Cardiac septum (tissue), 1 donor: ENCODE measurements at regions of chr5 and their contacts with region 1.

Region 1: DNA sequence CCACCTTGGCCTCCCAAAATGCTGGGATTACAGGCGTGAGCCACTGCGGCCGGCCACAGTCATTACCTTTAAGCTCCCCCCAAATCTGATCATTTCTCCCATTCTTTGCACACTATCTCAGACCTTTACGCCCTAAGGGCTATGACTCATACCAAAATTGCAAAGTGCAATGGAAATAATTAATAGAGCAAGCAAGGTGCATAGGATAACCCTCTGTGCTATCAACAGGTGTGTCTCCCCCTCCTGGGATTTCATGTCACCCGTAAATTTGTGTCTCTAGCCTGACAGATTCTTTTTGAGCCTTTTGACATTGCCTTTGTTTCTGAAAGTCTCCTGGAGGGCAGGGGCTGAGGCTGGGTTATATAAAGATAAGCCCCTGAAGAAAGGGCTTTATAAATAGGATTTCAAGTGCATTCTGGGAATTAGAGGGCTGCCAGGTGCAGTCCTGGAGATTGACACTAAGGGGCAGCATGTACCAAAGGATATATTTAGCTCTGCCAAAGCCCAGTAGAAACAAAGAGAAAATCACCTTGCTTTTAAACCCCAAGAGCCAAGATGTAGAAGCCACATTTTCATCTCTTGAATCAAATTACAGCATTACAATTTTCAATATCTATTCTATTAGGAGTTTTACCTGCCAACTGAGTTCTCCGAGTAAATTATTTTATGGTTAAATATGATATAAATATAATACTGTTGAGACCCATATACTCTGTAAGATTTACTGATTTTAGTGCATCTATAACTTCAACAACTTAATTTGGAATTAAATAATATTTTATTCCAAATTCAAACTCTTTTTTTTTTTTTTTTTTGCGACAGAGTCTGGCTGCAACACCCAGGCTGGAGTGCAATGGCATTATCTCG is 18.2 kb downstream of the S100Z start:
- DNase-seq: no peak

Region 2: DNA sequence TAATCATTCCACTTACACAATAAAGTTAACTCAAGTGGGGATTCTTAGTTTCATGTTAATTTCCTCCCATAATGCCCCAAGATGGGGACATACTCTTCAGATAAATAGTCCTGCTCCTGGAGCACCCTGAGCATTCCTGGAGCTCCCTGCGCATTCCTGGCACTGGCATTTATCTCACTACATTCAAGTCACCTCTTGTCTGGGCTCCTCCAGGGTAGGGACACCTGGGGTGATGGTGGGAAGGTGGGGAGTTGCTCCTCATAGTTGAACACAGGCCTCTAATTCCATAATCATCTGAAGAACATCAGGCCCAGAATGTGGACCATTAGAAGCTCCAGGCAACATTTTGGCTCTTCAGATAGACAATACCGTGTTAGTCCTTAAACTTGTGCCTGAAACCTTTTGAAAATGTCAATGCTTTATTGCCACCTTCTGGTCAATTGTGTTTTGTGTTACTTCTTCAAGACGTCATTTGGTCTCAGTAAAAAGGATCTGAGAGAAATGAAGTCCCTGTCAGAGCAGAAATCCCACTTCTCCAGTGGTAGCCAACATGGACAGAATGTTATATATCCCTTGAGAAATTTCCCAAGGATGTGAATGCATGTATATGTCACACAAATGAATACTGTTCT is 148.0 kb after region 1 on chr5:
- intact Hi-C with region 1: loop called (anchors 2 kb)
- DNase-seq: no peak

Region 3: DNA sequence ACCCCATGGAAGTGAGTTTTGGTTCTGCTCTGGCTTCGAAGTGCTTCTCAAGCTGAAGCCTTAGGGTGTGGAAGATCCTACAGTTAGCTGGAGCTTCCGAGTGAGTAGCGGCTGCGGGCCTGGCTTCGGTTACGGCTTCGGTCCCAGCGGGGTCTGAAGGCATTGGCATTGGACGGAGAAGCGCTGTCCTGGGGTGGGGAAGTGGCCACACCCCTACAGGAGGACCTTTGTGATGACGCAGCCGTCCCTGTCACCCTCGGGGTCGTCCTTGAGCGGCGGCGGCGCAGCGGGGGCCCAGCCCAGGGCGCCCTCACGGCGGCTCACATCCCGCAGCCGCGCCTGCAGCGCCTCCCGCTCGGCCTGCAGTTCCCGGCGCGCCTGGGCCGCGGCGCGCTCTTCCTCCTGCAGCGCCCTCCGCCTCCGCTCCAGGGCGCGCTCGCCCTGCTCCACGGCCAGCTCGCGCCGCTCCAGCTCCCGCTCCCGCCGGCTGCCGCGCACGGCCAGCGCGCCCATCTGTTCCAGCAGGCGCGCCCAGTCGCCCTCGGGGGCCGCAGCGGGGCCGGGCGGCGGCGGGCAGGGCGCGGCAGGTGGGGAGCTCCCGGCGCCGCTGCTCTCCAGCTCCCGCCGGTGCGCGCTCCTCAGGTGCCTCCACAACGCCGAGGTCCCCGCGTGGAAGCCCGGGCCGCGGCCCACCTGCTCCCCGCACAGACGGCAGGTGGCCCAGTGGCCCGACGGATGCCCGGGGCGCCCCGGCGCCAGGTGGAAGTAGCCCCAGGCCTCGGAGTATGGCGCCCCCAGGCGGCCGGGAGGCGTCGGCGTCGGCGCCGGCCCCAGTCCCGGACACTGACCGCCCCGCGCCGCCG is 209.1 kb after region 1 on chr5:
- intact Hi-C with region 1: loop called (anchors 5 kb)
- DNase-seq: peak; percentile 92

Region 4: DNA sequence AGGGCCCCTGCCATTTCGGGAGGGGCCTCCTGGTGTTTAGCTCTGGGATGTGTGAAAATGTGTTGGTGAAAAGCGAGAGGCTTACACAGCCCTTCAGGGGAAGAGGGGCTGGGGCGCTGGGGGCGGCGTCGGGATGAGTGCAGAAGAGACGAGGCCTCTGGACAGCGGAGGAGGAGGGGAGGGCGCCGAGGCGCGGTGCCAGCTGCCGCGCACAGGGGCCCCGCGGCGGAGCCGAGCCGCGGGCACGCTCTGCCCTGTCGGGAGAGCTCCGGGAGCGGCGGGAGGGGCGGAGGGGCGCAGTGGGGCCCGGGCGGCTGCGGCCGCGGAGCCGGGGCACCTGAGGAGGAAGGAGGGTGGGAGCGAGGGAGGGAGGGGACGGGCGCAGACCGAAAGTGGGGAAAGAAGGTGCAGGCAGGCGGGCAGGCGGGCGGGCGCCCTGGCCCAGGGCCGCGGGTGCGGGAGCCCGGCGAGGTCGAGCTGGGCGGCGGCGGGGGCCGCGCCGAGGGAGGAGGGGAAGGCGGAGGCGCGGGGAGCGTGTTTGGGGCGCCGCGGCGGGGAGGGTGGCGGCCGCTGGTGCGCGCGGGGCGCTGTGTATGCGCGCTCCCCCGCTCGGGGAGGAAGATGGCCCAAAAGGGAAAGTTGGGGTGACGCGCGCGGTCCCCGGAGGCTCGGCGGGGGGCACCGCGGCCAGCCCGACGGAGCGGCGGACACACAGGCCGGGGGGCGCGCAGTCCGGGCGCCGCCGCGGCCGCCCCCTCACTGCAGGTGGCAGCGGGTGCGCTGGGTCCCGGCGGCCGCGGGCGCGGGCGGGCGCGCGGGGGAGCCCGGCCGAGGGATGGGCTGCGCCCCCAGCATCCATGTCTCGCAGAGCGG is 342.3 kb after region 1 on chr5 and contains the start of gene PDE8B:
- intact Hi-C with region 1: no loop called
- DNase-seq: no peak
- total RNA-seq, gene PDE8B: 5.7 TPM

Region 5: DNA sequence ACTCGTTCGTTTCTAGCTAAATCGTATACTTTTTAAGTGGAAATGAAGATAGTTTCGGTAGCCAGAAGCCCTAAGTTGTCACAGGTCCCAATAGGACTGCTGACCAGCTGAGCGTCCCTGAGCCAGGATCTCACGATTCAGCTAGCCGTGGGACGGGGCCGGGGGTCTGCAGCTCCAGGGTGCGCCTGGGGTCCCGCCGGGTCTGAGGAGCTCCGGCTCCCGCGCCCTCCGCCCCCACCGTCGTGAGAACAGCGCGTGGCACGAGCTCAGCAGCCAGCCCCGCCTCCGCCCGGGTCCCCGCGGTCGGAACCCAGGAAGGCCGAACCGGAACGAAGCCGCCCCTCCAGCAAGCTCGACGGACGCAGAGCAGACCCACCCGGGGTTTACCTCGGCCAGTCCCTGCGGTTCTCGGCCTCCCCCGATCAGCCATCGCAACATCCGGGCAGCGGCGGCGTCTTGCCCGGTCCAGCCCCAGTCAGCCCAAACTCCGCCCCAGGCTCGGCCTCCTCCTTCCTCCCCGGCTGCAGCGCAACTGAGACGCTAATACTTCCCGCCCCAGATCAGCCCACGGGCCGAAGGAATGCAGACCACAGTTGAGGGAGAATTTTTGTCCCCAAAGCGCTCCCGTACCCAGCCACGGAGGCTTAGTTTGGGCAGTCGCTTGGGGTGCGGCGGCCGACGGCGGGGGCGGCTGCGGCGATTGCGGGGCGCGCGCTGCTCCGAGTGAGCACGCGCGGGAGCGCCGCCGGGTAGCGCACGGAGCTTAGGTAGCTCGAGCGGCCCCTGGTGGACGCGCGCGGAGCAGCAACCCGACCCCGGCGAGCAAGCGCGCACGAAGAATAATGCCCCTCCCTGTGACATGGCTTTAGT is 624.0 kb after region 1 on chr5 and contains the start of gene WDR41:
- intact Hi-C with region 1: loop called (anchors 2 kb)
- DNase-seq: peak; percentile 96
- total RNA-seq, gene WDR41: 35.1 TPM